GM12878 (cell line): ENCODE measurements at regions of chr4 and their contacts with region 1.

Region 1: DNA sequence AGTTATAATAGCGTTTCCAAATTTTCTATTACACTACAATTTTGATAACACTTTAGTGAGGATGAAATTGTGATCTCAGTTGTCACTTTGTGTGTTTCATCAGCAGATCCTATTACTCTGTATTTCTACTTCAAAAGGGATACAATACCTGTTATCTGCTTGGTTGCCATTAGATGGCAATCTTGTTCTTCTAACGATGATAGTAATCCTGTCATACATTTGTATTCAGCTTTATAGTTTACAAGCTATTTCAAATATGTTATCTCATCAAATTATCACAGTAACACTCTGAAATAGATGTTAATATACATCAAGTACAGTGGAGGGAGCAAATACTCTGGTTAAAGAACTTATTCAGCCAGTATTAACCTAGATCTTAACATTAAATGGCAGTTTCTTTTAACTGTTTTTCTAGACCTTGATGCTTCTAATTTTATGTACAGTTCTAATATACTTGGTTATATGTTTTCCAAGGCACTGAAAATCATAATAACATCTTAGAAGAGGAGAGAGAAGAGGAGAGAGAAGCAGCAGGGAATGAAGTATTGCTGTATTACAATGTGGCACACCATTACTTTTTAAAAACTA is 292.0 kb downstream of the CCSER1 start:
- DNase-seq: no peak
- ATAC-seq: peak; percentile 79
- H3K4me3 ChIP-seq: no peak overlapping the region
- H3K27ac ChIP-seq: no peak overlapping the region
- H3K4me1 ChIP-seq: no peaks in the 10 kb centered on the region
- H3K27me3 ChIP-seq: no peaks in the 10 kb centered on the region
- CTCF ChIP-seq: peak; percentile 43 to 69 (median 55); a peak in 4 of 6 replicates
- EP300 ChIP-seq: no peak
- POLR2A ChIP-seq: no peak
- RAD21 ChIP-seq: peak; percentile 75

Region 2: DNA sequence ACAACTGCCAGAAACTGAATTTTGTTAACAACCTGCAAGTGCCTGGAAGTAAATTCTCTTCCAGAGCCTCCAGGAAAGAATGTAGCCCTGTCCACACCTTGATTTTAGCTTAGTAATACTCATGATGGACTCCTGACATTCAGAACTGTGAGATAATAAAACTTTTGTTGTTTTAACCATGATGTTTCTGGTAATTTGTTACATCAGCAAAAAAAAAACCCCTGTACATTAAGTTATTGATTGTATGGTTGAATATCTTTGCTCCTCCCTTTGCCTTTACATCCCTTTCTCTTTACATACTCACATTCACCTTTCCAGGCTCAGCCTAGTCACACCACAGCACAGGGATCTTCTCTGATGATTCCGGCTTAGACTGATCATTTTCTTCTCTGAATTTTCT is 1002.8 kb after region 1 on chr4:
- CTCF ChIA-PET with region 1: no interaction called
- POLR2A ChIA-PET with region 1: no interaction called
- RAD21 ChIA-PET with region 1: no interaction called
- SMC1A ChIA-PET with region 1: no interaction called
- in situ Hi-C with region 1: no loop called
- intact Hi-C with region 1: no loop called
- DNase-seq: no peak
- ATAC-seq: no peak
- H3K4me3 ChIP-seq: no peak overlapping the region
- H3K27ac ChIP-seq: no peak overlapping the region
- H3K4me1 ChIP-seq: no peaks in the 10 kb centered on the region
- H3K27me3 ChIP-seq: no peaks in the 10 kb centered on the region
- CTCF ChIP-seq: no peak
- EP300 ChIP-seq: no peak
- POLR2A ChIP-seq: no peak
- RAD21 ChIP-seq: no peak

Region 3: DNA sequence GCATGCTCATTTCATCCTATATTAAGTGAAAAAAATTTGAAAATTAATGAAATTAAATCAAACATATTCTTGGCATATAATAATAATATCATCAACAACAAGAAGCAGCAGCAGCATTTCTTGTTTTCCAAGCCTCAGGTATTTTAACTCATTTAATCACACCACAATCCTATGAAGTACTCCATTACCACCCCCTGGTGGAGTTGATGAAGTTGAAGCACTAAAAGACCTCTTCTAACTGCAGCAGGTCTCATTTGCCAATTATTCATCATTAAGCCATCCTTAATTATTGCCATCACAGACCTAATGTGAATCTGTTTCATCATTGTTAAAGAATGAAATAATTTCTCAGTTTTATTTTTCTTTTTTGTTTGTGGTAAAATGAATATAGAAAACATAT is 1083.1 kb after region 1 on chr4:
- CTCF ChIA-PET with region 1: no interaction called
- POLR2A ChIA-PET with region 1: no interaction called
- RAD21 ChIA-PET with region 1: no interaction called
- SMC1A ChIA-PET with region 1: no interaction called
- in situ Hi-C with region 1: no loop called
- intact Hi-C with region 1: loop called (anchors 10 kb)
- DNase-seq: no peak
- ATAC-seq: peak; percentile 77
- H3K4me3 ChIP-seq: no peak overlapping the region
- H3K27ac ChIP-seq: no peak overlapping the region
- H3K4me1 ChIP-seq: no peaks in the 10 kb centered on the region
- H3K27me3 ChIP-seq: no peaks in the 10 kb centered on the region
- CTCF ChIP-seq: peak in 1 of 3 experiments; percentile 35; a peak in 1 of 6 replicates
- EP300 ChIP-seq: no peak
- POLR2A ChIP-seq: no peak
- RAD21 ChIP-seq: peak; percentile 26; the same call in 1 of the 2 replicates

Region 4: GRCh38 chr4:92387459-92388069 is 1968.3 kb after region 1 on chr4:
- CTCF ChIA-PET with region 1: interaction called, 20 read pairs
- POLR2A ChIA-PET with region 1: no interaction called
- RAD21 ChIA-PET with region 1: interaction called, 5 read pairs
- SMC1A ChIA-PET with region 1: interaction called, 6 read pairs
- in situ Hi-C with region 1: loop called (anchors 25 kb)
- intact Hi-C with region 1: loop called (anchors 10 kb)
- DNase-seq: peak; percentile 4
- ATAC-seq: peak; percentile 85
- H3K4me3 ChIP-seq: no peak overlapping the region
- H3K27ac ChIP-seq: no peak overlapping the region
- H3K4me1 ChIP-seq: no peaks in the 10 kb centered on the region
- H3K27me3 ChIP-seq: no peaks in the 10 kb centered on the region
- CTCF ChIP-seq: peak; percentile 47 to 55 (median 53); a peak in 5 of 6 replicates
- EP300 ChIP-seq: no peak
- POLR2A ChIP-seq: no peak
- RAD21 ChIP-seq: peak; percentile 34; the same call in 1 of the 2 replicates